Astrocyte of the cerebellum (primary cell): ENCODE measurements at regions of chr15 and their contacts with region 1.

Region 1: GRCh38 chr15:78299101-78299930 is at the start of gene SKIC8:
- DNase-seq: peak; percentile 68
- H3K4me3 ChIP-seq: peak within 1 kb of the TSS; percentile 89
- CTCF ChIP-seq: no peak

Region 2: GRCh38 chr15:78422571-78423340 is 123.4 kb after region 1 on chr15:
- in situ Hi-C with region 1: loop called (anchors 25 kb)
- DNase-seq: peak; percentile 24
- H3K4me3 ChIP-seq: no peak overlapping the region
- CTCF ChIP-seq: peak; percentile 96